ENCODE measurements at regions of chr1 and their contacts with region 1.

Region 1: GRCh38 chr1:21861602-21862429 is 49.8 kb downstream of the LDLRAD2 start:
- DNase-seq: peak; percentile 61 to 83
- H3K4me3 ChIP-seq: no peak overlapping the region
- H3K27ac ChIP-seq: peak overlapping the region; percentile 46; the same call in 1 of the 2 replicates
- H3K4me1 ChIP-seq: peaks cover 11% of the 10 kb centered on the region
- H3K27me3 ChIP-seq: no peaks in the 10 kb centered on the region
- CTCF ChIP-seq: no peak

Region 2: DNA sequence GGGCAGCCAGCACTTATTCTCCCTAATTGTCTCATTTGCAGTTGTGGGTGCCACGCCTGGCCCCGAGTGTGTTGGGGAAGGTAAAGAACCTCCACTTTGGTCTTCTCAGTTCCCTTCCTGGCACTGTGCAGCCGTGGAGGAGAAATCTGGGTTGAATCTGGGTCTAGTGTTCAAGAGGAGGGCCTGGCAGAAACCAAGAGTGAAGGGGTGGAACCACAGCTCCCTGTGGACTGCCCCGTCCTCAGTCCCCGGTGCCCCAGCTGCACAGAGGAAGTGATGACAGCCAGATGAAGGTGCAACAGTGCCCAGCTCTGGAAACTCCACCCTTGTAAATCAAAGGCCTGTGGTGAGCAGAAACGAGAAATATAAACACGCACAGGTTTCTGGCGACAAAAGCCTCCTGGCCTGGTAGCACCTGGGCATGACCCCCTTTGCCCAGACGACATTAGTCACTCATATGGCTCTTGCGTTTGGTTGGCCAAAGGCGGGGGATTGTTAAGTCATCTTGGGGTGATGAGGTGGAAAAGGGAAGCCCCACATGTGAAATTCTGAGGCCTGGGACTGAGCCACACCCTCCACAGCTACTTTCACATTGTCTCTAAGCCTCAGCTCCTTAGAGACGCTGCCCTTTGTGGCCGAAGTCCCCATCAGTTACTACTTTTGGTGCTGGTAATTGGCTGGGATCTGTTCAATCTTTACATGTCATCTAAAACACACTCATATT is 567.4 kb before region 1 on chr1:
- CTCF ChIA-PET with region 1: no interaction called
- POLR2A ChIA-PET with region 1: no interaction called
- intact Hi-C with region 1: no loop called
- DNase-seq: peak; percentile 71 to 85
- H3K4me3 ChIP-seq: peak overlapping the region; percentile 2; the same call in 1 of the 2 replicates
- H3K27ac ChIP-seq: peak overlapping the region; percentile 94
- H3K4me1 ChIP-seq: peaks cover 42% of the 10 kb centered on the region
- H3K27me3 ChIP-seq: no peaks in the 10 kb centered on the region
- CTCF ChIP-seq: no peak

Region 3: DNA sequence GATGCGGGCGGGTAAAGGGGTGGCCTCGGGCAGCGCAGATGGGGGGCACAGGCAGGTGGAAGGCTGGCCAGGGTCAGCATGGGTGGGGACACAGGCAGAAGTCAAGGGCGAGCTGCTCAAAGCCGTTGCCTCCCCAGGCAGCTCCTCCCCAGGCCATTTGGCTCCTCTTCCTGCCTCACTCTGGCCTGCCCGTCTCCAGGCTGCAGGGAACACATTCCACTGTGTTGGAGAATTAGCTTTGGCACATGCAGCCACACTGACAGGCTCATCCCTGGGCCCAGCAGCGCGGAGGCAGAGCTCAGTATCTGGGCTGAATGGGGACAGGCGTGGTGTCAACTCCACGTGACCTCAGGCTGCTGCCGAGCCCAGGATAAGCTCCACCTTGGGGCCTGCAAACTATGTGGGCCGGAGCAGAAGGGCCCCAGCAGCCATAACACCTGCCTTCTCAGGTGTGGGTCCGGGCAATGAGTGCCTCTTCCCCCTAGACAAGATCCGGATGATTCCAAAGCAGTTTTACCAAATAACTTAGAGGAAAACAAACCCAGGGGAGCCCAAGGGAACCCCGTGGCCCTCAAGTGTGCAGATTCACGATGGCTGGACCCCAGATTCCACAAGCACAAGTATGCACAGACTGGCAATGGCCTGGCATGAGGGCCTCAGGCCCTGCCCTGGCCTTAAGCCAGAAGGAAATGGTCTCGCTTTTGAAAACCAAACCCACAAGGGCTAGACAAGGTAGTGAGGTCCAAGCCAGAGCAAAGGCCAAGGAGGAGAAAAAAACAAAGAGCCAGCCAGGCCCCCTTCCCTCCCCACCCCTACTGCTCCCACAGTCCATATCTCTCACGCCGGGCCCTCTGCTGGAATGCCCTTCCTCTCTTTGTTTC is 35.1 kb after region 1 on chr1:
- CTCF ChIA-PET with region 1: no interaction called
- POLR2A ChIA-PET with region 1: no interaction called
- intact Hi-C with region 1: loop called (anchors 2 kb)
- DNase-seq: peak in 1 of 2 experiments; percentile 72
- H3K4me3 ChIP-seq: no peak overlapping the region
- H3K27ac ChIP-seq: no peak overlapping the region
- H3K4me1 ChIP-seq: no peaks in the 10 kb centered on the region
- H3K27me3 ChIP-seq: no peaks in the 10 kb centered on the region
- CTCF ChIP-seq: no peak

Region 4: DNA sequence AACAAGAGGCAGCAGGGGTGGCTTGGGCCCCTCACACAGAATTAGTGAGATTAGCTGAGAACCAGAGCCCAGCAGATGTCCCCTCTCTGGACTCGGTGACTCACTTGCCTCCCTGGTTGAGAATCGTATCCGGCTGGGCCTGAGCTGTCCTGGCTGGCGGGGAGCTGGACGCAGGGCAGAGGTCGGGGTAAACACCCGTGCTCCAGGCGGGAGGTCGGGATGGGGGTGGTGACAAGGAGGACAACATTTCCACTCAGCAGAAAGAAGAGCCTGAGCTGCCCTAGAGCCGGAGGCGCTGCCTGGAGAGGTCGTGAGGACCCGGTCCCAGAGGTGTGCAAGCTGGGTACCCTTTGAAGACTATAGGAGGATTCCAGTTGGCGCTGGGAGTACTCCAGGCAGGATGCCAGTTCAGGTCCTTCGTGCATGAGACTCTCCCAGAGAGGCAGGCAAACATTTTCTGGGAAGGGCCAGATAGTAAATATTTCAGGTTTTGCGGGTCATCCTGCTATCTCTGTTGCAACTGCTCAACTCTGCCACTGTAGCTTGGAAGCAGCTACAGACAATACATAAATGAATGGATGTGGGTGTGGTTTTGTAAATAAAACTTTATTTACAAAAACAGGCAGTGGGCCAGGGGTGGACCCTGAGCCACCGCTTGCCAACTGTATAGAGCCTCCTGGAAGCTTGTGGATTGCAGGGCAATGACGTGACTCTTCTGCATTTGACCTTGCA is 397.9 kb after region 1 on chr1:
- CTCF ChIA-PET with region 1: no interaction called
- POLR2A ChIA-PET with region 1: no interaction called
- intact Hi-C with region 1: no loop called
- DNase-seq: peak; percentile 43 to 83
- H3K4me3 ChIP-seq: peak overlapping the region; percentile 14; the same call in 1 of the 2 replicates
- H3K27ac ChIP-seq: peak overlapping the region; percentile 89
- H3K4me1 ChIP-seq: peaks cover 56% of the 10 kb centered on the region
- H3K27me3 ChIP-seq: no peaks in the 10 kb centered on the region
- CTCF ChIP-seq: no peak